HepG2 (cell line): ENCODE measurements at regions of chr2 and their contacts with region 1.

Region 1: DNA sequence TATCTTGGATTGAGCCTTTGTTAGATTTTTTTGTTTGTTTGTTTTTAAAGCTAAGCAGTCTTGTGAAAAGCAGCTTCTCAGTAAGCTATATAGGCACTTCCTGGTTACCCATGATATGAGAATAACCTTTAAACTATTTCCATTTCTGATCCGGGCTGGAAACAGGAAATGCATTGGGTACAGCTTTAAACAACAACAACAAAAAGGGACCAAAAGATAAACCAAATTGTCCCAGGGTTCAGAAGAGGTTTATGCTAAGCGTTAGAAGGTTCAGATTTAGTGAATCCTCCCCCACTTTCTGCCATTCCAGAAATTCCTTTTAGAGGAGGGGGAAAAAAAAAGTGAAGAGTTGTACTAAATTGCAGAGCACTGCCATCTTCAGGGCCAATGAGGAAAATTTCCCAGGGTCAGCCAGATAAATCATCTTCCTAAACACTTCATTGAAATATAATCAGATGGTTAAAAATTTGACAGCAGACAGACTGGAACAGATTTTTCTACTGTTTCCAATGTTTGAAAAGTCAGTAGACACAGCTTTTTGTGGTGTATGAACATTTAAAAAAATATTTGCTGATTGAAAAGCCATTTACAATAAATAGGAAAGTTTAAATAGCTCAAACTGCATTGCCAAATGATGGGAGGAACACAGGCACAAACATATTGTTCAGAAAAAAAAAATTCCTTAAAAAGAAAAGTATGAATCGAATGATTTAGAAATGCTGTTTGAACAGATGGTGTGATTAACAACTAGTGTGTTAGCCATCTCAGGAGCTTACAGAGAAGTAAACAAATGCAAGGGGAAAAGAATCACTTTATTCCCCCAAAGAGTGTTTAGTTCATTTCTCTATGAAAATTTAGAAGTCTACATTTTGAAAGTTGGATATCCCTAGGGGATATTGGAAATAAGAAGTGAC is 189.9 kb upstream of the TANK start:
- DNase-seq: peak; percentile 80
- ATAC-seq: peak; percentile 85
- H3K4me3 ChIP-seq: peak overlapping the region; percentile 37 to 62 (median 61); a peak in 5 of 6 replicates
- H3K27ac ChIP-seq: no peak overlapping the region
- H3K4me1 ChIP-seq: no peaks in the 10 kb centered on the region
- H3K27me3 ChIP-seq: no peaks in the 10 kb centered on the region; a peak in 2 of 5 replicates
- CTCF ChIP-seq: peak; percentile 82
- EP300 ChIP-seq: 0 out of 4 replicates have a peak, but pooled peaks of 1 of the 2 experiments have one; percentile 33
- POLR2A ChIP-seq: no peak
- RAD21 ChIP-seq: peak; percentile 87

Region 2: DNA sequence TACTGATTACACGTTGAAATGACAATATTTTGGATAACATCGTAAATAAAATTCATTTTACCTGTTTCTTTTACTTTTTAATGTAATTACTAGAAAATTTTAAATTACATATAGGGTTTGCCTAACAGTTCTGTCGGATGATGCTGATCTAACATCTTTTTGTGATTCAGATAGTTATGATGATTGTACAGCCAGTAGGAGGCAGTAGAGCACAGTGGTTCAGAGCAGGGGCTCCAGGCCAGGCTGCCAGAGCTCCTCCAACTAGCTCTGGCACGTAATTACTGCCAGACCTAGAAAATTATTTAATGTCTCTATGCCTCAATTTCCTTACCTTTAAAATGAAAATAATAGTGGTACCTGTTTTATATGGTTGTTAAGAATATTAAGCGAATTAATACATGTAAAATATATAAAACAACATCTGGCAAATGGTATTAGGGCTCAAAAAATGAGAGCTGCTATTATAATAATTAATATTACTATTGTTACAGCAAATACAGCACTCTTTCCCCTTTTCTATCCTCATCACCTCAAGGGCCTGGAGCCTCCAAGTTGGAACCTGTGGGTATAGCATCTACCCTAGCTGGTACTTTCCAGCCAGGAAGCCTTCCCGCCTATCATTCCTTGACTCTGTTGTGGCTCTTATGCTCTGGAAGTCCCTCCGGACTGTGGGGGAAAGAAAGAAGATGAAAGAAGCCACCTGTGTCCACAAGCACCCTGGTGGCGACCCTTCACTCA is 860.2 kb before region 1 on chr2:
- CTCF ChIA-PET with region 1: interaction called, 10 read pairs
- POLR2A ChIA-PET with region 1: no interaction called
- in situ Hi-C with region 1: no loop called
- intact Hi-C with region 1: loop called (anchors 1 kb)
- DNase-seq: peak; percentile 62
- ATAC-seq: peak; percentile 97
- H3K4me3 ChIP-seq: no peak overlapping the region
- H3K27ac ChIP-seq: no peak overlapping the region
- H3K4me1 ChIP-seq: no peaks in the 10 kb centered on the region
- H3K27me3 ChIP-seq: peaks cover 0 to 8% of the 10 kb centered on the region in 2 experiments; a peak in 1 of 5 replicates
- CTCF ChIP-seq: peak; percentile 88
- EP300 ChIP-seq: no peak
- POLR2A ChIP-seq: no peak
- RAD21 ChIP-seq: peak; percentile 86

Region 3: GRCh38 chr2:160252278-160252887 is 717.9 kb before region 1 on chr2:
- CTCF ChIA-PET with region 1: interaction called, 12 read pairs
- POLR2A ChIA-PET with region 1: no interaction called
- in situ Hi-C with region 1: loop called (anchors 25 kb)
- intact Hi-C with region 1: loop called (anchors 1 kb)
- DNase-seq: peak; percentile 22
- ATAC-seq: peak; percentile 41; the same call in 2 of the 3 replicates
- H3K4me3 ChIP-seq: no peak overlapping the region
- H3K27ac ChIP-seq: no peak overlapping the region
- H3K4me1 ChIP-seq: no peaks in the 10 kb centered on the region
- H3K27me3 ChIP-seq: no peaks in the 10 kb centered on the region
- CTCF ChIP-seq: peak; percentile 73
- EP300 ChIP-seq: no peak
- POLR2A ChIP-seq: no peak
- RAD21 ChIP-seq: no peak

Region 4: GRCh38 chr2:160324161-160324800 is 646.0 kb before region 1 on chr2:
- CTCF ChIA-PET with region 1: interaction called, 7 read pairs
- POLR2A ChIA-PET with region 1: no interaction called
- in situ Hi-C with region 1: no loop called
- intact Hi-C with region 1: loop called (anchors 1 kb)
- DNase-seq: peak; percentile 34
- ATAC-seq: peak; percentile 54
- H3K4me3 ChIP-seq: no peak overlapping the region
- H3K27ac ChIP-seq: no peak overlapping the region
- H3K4me1 ChIP-seq: peaks cover 35% of the 10 kb centered on the region
- H3K27me3 ChIP-seq: no peaks in the 10 kb centered on the region
- CTCF ChIP-seq: peak; percentile 74
- EP300 ChIP-seq: no peak
- POLR2A ChIP-seq: no peak
- RAD21 ChIP-seq: peak; percentile 65

Region 5: GRCh38 chr2:160493227-160494028 is 476.9 kb before region 1 on chr2 and contains the start of gene RBMS1:
- CTCF ChIA-PET with region 1: no interaction called
- POLR2A ChIA-PET with region 1: no interaction called
- in situ Hi-C with region 1: no loop called
- intact Hi-C with region 1: loop called (anchors 2 kb)
- DNase-seq: peak; percentile 60
- ATAC-seq: peak; percentile 67
- H3K4me3 ChIP-seq: peak within 1 kb of the TSS; percentile 88 to 97 (median 95)
- H3K27ac ChIP-seq: peak within 1 kb of the TSS; percentile 96
- H3K4me1 ChIP-seq: peaks cover 32% of the 10 kb centered on the region
- H3K27me3 ChIP-seq: peaks cover 0 to 20% of the 10 kb centered on the region in 2 experiments; a peak in 3 of 5 replicates
- CTCF ChIP-seq: no peak
- EP300 ChIP-seq: no peak
- POLR2A ChIP-seq: peak in 1 of 2 experiments; percentile 79; a peak in 3 of 4 replicates
- RAD21 ChIP-seq: no peak
- total RNA-seq, gene RBMS1: 52.1 and 55.5 TPM in 2 replicates